BJ (cell line): ENCODE measurements at regions of chr3 and their contacts with region 1.

Region 1: DNA sequence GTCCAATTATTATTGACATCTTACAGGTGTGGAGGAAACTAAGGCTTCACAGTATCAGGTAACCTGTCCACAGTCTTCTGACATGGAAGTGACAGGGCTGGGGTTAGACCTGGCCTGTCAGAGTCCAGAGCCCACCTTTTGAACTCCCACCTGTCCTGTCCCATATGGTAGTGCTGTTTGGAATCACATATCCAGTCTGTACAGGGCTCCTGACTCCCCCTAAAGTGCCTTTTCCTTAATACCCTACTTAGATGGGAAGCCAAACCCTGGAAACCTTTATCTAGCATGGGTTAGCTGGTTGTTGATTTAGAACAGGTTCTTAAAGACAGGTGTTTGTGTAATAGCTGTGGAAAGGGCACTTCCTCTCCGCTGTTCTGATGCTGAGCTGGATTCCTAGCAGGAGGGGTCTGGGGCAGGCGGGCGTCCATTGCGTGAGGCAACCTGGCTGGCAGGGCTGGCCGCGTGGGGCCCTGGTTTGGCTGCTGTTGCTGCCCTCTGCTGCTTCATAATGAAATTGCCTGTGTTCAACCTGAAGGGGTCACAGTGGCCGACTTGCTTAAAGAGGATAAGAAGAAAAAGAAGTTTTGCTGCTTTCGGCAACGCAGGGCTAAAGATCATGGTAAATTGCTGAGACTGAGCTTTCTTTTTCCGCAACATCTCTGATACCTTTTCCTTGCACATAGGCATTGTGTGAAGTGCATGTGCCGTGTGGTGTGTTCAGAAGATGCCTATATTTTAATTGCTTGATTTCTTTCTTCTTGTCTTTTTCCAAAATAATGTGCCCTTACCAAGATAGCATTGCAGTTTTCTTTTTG is 136.2 kb downstream of the CHDH start:
- DNase-seq: no peak
- H3K4me3 ChIP-seq: no peak overlapping the region
- H3K27me3 ChIP-seq: peaks cover 1% of the 10 kb centered on the region
- CTCF ChIP-seq: peak; percentile 83

Region 2: GRCh38 chr3:53721187-53722119 is 11.4 kb after region 1 on chr3:
- CTCF ChIA-PET with region 1: interaction called, 15 read pairs
- POLR2A ChIA-PET with region 1: no interaction called
- DNase-seq: no peak
- H3K4me3 ChIP-seq: no peak overlapping the region
- H3K27me3 ChIP-seq: no peaks in the 10 kb centered on the region
- CTCF ChIP-seq: no peak